ENCODE measurements at regions of chr1 and their contacts with region 1.

Region 1: GRCh38 chr1:227486559-227486958 is 76.8 kb upstream of the ZNF678 start:
- H3K4me3 Mint-ChIP-seq: no peak overlapping the region
- H3K27ac Mint-ChIP-seq: no peak overlapping the region
- H3K4me1 Mint-ChIP-seq: peaks cover 14% of the 10 kb centered on the region
- H3K27me3 Mint-ChIP-seq: no peaks in the 10 kb centered on the region

Region 2: GRCh38 chr1:227518876-227519275 is 32.3 kb after region 1 on chr1:
- intact Hi-C with region 1: no loop called
- H3K4me3 Mint-ChIP-seq: no peak overlapping the region
- H3K27ac Mint-ChIP-seq: no peak overlapping the region
- H3K4me1 Mint-ChIP-seq: no peaks in the 10 kb centered on the region
- H3K27me3 Mint-ChIP-seq: no peaks in the 10 kb centered on the region

Region 3: DNA sequence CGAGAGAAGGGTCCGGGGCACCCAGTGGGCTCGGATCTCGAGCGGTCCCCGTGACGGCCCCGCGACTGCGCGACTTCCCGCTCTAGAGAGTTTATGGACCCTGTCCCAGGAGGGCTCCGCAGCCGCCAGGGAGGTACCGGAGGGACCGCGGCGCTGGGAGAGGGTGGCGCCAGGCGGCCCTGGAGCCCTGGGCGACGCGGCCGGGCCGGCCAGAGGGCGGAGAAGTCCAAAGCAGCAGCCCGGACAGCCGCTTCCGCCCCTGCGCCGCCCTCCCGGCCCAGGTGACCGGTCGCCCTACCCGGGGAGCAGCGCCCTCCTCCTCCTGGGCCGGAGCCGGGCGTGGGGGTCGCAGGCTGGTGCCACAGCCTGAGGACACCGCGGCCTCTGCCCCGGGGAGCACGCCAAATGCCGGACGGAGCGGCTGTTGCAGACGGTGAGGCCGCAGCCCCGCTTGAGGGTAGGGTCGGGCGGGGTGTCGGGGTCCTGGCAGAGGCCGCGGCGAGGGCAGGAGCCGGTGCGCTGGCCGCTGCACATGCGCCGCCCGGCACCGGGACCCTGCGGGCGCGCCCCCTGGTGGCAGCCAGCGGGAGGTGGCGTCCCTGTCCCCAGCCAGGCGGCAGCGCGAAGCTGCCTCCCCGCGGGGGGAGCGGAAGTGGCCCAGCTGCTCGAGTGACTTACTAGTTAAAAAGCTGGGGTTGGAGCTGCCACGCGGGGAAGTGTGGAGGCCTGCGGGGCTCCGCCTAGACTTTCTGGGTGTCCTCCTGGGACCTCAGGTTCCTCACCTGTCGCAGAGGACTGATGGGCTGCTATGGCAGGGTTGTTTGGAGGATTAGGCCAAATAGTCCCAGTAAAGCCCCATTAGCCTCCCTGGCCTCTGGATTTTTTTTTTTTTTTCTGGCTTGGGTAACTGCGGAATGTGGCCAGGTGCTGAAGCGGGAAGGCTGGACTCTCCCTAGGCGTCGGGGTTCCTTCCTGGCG is 55.9 kb after region 1 on chr1:
- intact Hi-C with region 1: loop called (anchors 5 kb)
- H3K4me3 Mint-ChIP-seq: peak overlapping the region; percentile 70
- H3K27ac Mint-ChIP-seq: no peak overlapping the region
- H3K4me1 Mint-ChIP-seq: peaks cover 5% of the 10 kb centered on the region
- H3K27me3 Mint-ChIP-seq: peaks cover 19% of the 10 kb centered on the region

Region 4: GRCh38 chr1:227762233-227762911 is 275.8 kb after region 1 on chr1:
- intact Hi-C with region 1: loop called (anchors 2 kb)
- H3K4me3 Mint-ChIP-seq: no peak overlapping the region
- H3K27ac Mint-ChIP-seq: no peak overlapping the region
- H3K4me1 Mint-ChIP-seq: peaks cover 37% of the 10 kb centered on the region
- H3K27me3 Mint-ChIP-seq: no peaks in the 10 kb centered on the region

Region 5: GRCh38 chr1:227946624-227947385 is 460.2 kb after region 1 on chr1:
- intact Hi-C with region 1: loop called (anchors 2 kb)
- H3K4me3 Mint-ChIP-seq: peak overlapping the region; percentile 35
- H3K27ac Mint-ChIP-seq: no peak overlapping the region
- H3K4me1 Mint-ChIP-seq: peaks cover 6% of the 10 kb centered on the region
- H3K27me3 Mint-ChIP-seq: peaks cover 53% of the 10 kb centered on the region